CD14-positive monocyte (primary cell): ENCODE measurements at regions of chr19 and their contacts with region 1.

Region 1: DNA sequence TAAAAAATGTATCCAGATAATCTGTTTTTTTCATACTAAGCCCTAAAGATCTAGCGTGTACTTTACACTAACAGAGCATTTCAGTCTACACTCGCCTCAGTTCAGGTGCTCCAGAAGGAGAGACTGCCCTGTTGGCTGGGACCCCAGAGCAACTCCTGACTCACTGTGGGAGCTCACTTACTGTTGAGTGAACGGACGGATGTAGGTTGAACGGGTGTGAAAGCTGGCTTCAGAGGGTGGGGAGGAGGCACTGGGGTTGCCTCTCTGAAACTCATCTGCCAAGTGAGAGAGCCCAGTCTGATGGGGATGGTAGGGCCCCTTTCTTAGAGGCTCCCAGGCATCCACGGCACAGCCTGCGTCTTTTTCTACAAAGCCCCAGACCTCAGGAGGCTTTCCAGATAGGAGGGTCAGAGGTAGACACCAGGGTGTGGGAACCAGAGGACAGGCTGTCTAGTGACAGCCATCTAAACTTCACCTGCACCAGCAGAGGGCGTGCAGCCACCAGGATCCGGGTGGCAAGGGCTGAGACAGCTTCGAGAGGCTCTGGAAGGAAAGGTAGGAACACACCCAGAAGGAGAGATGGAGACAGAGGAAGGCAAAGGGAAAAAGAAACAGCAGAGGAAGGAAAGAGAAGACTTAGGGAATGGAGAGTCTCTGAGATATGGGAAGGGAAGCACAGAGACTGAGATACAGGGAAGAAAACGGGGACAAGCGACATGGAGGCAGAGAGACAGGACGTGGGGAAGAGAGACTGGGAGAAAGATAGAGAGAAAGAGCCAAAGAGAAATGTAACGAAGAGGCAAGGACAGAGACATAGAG is 3.7 kb downstream of the KASH5 start:
- DNase-seq: peak; percentile 54 to 64 (median 58)
- H3K4me3 ChIP-seq: no peak overlapping the region
- H3K4me3 Mint-ChIP-seq: peak overlapping the region in 1 of 2 donors; percentile 24
- H3K27ac ChIP-seq: no peak overlapping the region
- H3K27ac Mint-ChIP-seq: no peak overlapping the region
- H3K4me1 ChIP-seq: peaks cover 3 to 5% of the 10 kb centered on the region in 2 donors
- H3K4me1 Mint-ChIP-seq: peaks cover 19% of the 10 kb centered on the region
- H3K27me3 ChIP-seq: no peaks in the 10 kb centered on the region
- H3K27me3 Mint-ChIP-seq: peaks cover 4 to 13% (median 13%) of the 10 kb centered on the region in 3 donors
- CTCF ChIP-seq: peak; percentile 89

Region 2: DNA sequence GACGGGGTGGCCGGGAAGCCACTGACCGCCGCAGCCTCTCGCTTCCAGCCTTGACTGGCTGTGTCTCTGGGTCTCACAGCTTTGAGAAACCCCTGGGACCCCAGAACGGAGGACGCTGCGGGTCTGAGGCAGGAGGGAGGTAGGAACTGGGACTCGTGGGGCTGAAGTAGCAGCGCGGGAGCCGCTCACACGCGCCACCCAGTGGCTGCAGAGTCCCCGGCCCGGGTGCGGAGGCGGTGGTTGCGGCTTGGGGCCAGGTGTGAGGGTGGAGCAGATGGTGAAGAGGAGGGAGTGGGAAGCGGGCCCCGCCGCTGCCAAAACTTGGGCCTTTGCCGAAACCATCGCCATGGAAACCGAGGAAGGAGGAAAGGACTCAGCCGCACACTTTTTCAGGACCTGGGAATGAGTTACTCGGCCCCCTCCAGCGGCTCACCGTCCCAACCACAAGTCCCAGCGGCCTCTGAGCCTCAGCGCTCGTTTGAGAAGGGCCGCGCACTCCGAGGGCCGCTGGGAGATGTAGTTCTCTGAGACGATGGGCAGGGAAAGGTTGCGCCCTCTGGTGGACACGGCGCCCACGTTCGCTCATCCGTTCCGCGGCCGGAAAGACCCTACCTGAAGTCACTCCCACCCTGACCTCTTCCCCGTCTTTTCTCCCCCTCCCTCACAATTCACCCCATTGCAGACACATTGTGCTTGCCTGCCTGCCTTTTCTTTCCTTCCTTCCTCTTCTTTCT is 51.7 kb after region 1 on chr19:
- intact Hi-C with region 1: loop called (anchors 1 to 5 kb)
- DNase-seq: peak; percentile 86 to 89 (median 88)
- H3K4me3 ChIP-seq: peak overlapping the region; percentile 45 to 95 (median 65)
- H3K4me3 Mint-ChIP-seq: peak overlapping the region; percentile 80 to 83
- H3K27ac ChIP-seq: no peak overlapping the region
- H3K27ac Mint-ChIP-seq: peak overlapping the region in 4 of 7 donors; percentile 56 to 74 (median 66)
- H3K4me1 ChIP-seq: peaks cover 37 to 46% of the 10 kb centered on the region in 2 donors
- H3K4me1 Mint-ChIP-seq: peaks cover 50% of the 10 kb centered on the region
- H3K27me3 ChIP-seq: peaks cover 36 to 39% of the 10 kb centered on the region in 2 donors
- H3K27me3 Mint-ChIP-seq: peaks cover 37 to 44% (median 40%) of the 10 kb centered on the region in 3 donors
- CTCF ChIP-seq: peak; percentile 85

Region 3: GRCh38 chr19:49473868-49474544 is 82.2 kb after region 1 on chr19 and contains the start of gene FLT3LG:
- intact Hi-C with region 1: loop called in 1 of 2 experiments (anchors 1 kb)
- DNase-seq: peak; percentile 82 to 86 (median 85)
- H3K4me3 ChIP-seq: peak within 1 kb of the TSS; percentile 62 to 90 (median 69)
- H3K4me3 Mint-ChIP-seq: peak within 1 kb of the TSS; percentile 86 to 91
- H3K27ac ChIP-seq: peak within 1 kb of the TSS; percentile 53 to 83
- H3K27ac Mint-ChIP-seq: peak within 1 kb of the TSS; percentile 33 to 92 (median 88)
- H3K4me1 ChIP-seq: peaks cover 32 to 41% of the 10 kb centered on the region in 2 donors
- H3K4me1 Mint-ChIP-seq: peaks cover 45% of the 10 kb centered on the region
- H3K27me3 ChIP-seq: no peaks in the 10 kb centered on the region
- H3K27me3 Mint-ChIP-seq: peaks cover 2 to 13% (median 6%) of the 10 kb centered on the region in 3 donors
- CTCF ChIP-seq: peak; percentile 93
- polyA plus RNA-seq, gene FLT3LG: 5.0 to 13.8 (median 6.9) TPM